ENCODE measurements at regions of chr6 and their contacts with region 1.

Region 1: DNA sequence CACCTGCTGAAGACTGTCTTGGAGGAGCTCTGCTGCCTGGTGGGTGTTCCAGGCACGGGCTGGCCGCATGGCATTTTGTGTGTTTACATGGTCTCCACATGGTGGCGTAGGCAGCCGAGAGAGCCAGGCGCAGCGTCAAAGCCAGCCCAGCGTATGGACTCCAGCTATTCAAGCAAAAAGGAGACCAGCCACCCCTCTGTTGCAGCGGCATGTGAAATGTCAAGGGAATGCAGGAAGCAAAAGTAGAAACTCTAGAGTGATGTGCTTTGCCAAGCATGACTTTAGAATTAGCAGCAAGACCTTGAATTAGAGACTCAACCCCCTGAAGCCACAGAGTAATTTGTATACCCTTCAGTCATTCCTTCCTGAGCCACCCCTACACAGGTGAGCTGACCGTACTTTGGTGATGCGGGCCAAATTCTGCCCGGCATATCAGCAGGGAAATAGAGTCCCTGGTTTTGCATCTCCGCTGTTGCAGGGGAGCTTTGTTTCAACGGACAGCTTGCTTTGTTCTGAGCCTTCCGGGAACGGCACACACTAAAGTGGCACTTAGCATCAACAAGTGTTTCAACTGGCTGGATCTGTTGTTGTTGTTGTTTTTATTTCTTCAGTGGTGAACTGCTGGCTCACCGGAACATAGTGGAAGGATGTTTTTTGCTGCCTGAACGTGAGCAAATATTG is 48.5 kb downstream of the FNDC1 start:
- DNase-seq: no peak
- H3K4me3 ChIP-seq: no peak overlapping the region
- CTCF ChIP-seq: peak; percentile 59

Region 2: GRCh38 chr6:159204605-159205004 is 13.1 kb before region 1 on chr6:
- CTCF ChIA-PET with region 1: interaction called, 15 read pairs
- POLR2A ChIA-PET with region 1: no interaction called
- DNase-seq: no peak
- H3K4me3 ChIP-seq: no peak overlapping the region
- CTCF ChIP-seq: no peak

Region 3: DNA sequence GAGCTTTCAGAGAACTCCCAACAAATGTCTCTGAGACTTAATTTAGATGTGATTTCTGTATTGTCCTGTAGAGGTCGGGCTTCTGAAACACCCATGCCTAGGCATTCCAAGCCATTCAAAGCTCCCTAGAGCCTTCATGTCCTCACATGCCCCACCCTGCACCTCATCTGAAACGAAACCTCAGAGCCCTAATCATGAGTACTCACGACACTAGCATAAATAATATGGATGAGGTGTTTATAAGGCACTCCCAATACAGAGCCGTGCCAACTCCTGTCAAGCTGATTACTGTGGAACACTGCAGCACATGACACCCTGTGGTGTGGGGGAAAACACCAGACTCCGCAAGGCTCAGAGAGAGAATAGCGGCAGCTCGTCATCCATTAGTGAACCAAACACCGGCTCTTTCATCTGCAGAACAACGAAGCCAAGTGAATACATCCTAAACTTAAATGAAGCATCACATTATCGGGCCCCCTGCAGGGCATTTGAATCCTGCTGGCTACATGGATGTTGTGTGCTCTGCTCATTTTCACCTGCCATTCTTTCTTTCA is 35.3 kb after region 1 on chr6:
- CTCF ChIA-PET with region 1: interaction called, 15 read pairs
- POLR2A ChIA-PET with region 1: no interaction called
- DNase-seq: no peak
- H3K4me3 ChIP-seq: no peak overlapping the region
- CTCF ChIP-seq: peak; percentile 26

Region 4: DNA sequence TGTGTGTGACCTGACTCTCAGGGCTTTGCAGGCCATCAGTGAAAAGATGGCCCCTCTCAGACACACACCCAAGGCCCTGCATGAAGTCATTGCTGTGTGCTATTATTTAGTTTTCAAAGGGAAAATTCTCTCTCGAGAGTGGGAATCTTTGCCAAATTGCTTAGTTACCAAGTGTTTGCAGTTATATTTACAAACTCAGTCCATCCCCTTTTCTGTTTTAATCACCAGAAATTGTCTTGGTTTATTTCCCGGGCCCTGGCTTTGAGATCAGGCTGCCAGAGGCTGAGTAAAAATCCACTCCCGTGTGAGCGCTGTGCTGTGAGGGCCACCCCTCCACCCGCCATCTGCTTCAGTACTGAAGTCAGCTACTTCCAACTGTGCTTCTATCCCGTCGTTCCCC is 312.2 kb after region 1 on chr6:
- CTCF ChIA-PET with region 1: no interaction called
- POLR2A ChIA-PET with region 1: no interaction called
- DNase-seq: no peak
- H3K4me3 ChIP-seq: no peak overlapping the region
- CTCF ChIP-seq: no peak

Measured in AG04449 (cell line).